Mammary epithelial cell (primary cell): ENCODE measurements at regions of chr10 and their contacts with region 1.

Region 1: DNA sequence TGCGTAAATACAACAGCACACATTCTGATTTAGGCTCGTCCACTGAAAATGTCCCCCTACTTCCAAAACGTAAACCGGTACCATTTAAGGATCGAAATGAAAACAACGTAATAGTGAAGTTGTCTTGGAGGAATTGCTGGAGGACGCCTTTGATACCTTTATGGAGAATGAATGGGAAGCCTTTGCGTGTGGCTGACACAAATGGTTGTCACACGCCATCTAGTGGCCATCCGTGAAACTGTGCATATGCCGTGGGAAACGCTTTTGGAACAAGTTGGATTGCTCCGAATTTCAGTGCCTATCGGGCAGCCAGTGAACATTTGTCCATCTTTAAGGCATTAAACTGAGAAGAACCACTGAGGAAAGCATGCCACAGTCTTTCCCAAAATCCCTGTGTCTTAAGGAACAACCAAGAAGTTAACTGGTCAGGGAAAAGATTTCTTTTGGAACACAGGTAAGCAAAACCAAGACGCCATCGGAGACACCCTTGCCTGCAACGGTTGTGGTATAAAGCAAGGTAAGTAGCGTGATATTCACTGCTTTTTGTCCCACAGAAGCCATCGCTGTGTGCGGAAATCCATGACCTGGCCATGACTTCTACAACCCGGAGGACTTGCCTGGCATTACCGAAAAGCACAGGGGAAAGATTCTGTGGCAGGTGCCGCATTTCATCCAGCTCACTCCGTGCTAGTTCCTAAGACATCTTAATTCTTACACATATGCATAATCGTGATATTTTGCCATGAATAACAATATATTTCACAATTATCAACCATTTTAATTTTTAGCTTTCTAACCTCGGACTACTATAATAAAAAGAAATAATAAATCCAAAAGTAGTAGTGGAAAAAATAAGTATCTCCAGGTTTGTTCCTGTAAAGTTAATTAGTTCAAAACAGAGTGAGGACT is 100.6 kb downstream of the FAM204A start:
- DNase-seq: peak; percentile 71
- H3K4me3 ChIP-seq: no peak overlapping the region
- H3K27ac ChIP-seq: no peak overlapping the region
- H3K4me1 ChIP-seq: peaks cover 5% of the 10 kb centered on the region
- H3K27me3 ChIP-seq: peaks cover 2% of the 10 kb centered on the region
- CTCF ChIP-seq: peak; percentile 91 to 94

Region 2: GRCh38 chr10:117216611-117217195 is 1024.8 kb before region 1 on chr10:
- CTCF ChIA-PET with region 1: no interaction called
- dilution Hi-C with region 1: no loop called
- in situ Hi-C with region 1: loop called in 1 of 2 experiments (anchors 25 kb)
- intact Hi-C with region 1: loop called (anchors 10 kb)
- DNase-seq: peak; percentile 59
- H3K4me3 ChIP-seq: peak overlapping the region; percentile 51 to 68 (median 56)
- H3K27ac ChIP-seq: no peak overlapping the region
- H3K4me1 ChIP-seq: peaks cover 18% of the 10 kb centered on the region
- H3K27me3 ChIP-seq: no peaks in the 10 kb centered on the region
- CTCF ChIP-seq: peak; percentile 85 to 100

Region 3: GRCh38 chr10:117496616-117497028 is 744.9 kb before region 1 on chr10:
- CTCF ChIA-PET with region 1: interaction called, 7 read pairs
- dilution Hi-C with region 1: no loop called
- in situ Hi-C with region 1: loop called in 1 of 2 experiments (anchors 10 kb)
- intact Hi-C with region 1: loop called (anchors 1 kb)
- DNase-seq: peak; percentile 80
- H3K4me3 ChIP-seq: no peak overlapping the region
- H3K27ac ChIP-seq: no peak overlapping the region
- H3K4me1 ChIP-seq: peaks cover 5% of the 10 kb centered on the region
- H3K27me3 ChIP-seq: peaks cover 5% of the 10 kb centered on the region
- CTCF ChIP-seq: peak; percentile 94 to 97

Region 4: GRCh38 chr10:117720931-117721835 is 520.3 kb before region 1 on chr10:
- CTCF ChIA-PET with region 1: no interaction called
- dilution Hi-C with region 1: no loop called
- in situ Hi-C with region 1: no loop called
- intact Hi-C with region 1: loop called (anchors 10 kb)
- DNase-seq: no peak
- H3K4me3 ChIP-seq: no peak overlapping the region
- H3K27ac ChIP-seq: no peak overlapping the region
- H3K4me1 ChIP-seq: peaks cover 6% of the 10 kb centered on the region
- H3K27me3 ChIP-seq: peaks cover 4% of the 10 kb centered on the region
- CTCF ChIP-seq: no peak

Region 5: GRCh38 chr10:117896517-117896916 is 345.0 kb before region 1 on chr10:
- CTCF ChIA-PET with region 1: no interaction called
- dilution Hi-C with region 1: no loop called
- in situ Hi-C with region 1: loop called in 1 of 2 experiments (anchors 25 kb)
- intact Hi-C with region 1: no loop called
- DNase-seq: no peak
- H3K4me3 ChIP-seq: no peak overlapping the region
- H3K27ac ChIP-seq: no peak overlapping the region
- H3K4me1 ChIP-seq: no peaks in the 10 kb centered on the region
- H3K27me3 ChIP-seq: peaks cover 5% of the 10 kb centered on the region
- CTCF ChIP-seq: no peak

Region 6: DNA sequence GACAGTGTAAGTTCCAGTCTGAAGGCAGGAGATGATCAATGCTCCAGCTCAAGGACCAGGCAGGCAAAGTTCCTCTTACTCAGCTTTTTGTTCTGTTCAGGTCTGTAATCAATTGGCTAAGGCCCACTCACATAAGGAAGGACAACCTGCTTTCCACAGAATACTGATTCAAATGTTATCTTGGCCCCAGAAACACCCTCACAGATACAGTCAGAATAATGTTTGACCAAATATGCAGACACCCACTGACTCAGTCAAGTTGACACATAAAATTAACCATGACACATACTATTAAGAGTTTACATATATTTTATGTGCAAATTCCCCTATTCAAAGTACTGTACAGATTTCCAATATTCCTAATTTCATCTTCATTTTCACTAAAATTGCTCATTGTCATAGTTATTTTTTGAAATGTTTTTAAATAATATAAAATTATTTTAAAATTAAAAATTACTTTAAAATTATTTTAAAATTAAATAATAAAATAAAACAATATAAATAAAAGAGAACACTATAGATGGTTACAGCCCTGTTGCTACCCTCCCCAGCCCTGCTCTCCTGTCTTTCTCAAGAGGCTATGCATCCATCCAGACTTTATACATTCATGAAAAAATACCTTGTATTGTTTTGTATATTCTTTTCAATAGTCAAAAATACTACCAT is 254.1 kb before region 1 on chr10:
- CTCF ChIA-PET with region 1: no interaction called
- dilution Hi-C with region 1: no loop called
- in situ Hi-C with region 1: no loop called
- intact Hi-C with region 1: no loop called
- DNase-seq: peak; percentile 18
- H3K4me3 ChIP-seq: no peak overlapping the region
- H3K27ac ChIP-seq: no peak overlapping the region
- H3K4me1 ChIP-seq: no peaks in the 10 kb centered on the region
- H3K27me3 ChIP-seq: no peaks in the 10 kb centered on the region
- CTCF ChIP-seq: no peak

Region 7: GRCh38 chr10:118341791-118342637 is 100.5 kb after region 1 on chr10 and contains the start of gene FAM204A:
- CTCF ChIA-PET with region 1: no interaction called
- dilution Hi-C with region 1: no loop called
- in situ Hi-C with region 1: no loop called
- intact Hi-C with region 1: no loop called
- DNase-seq: peak; percentile 91
- H3K4me3 ChIP-seq: peak within 1 kb of the TSS; percentile 62 to 87 (median 83)
- H3K27ac ChIP-seq: peak within 1 kb of the TSS; percentile 75
- H3K4me1 ChIP-seq: peaks cover 10% of the 10 kb centered on the region
- H3K27me3 ChIP-seq: no peaks in the 10 kb centered on the region
- CTCF ChIP-seq: no peak
- total RNA-seq, gene FAM204A: 50.3 to 73.2 TPM

Region 8: DNA sequence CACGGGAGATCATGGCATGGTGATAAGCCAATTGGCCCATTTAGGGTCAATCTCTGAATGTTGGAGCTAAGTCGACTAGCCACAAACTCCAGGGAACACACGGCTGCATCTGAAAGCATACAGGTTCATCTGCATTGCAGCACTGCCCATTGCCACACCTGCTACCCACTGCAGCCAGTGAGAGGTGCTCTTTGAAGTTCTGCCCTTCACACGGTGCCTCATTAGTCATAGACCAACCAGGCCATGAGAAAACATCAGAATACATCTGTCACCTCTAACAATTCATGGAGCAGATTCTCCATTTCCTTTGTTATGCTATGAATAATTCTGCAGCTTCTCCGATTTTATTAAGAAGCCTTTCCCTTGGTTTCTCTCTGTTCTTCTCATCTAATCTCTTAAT is 166.3 kb after region 1 on chr10:
- CTCF ChIA-PET with region 1: no interaction called
- dilution Hi-C with region 1: no loop called
- in situ Hi-C with region 1: no loop called
- intact Hi-C with region 1: no loop called
- DNase-seq: peak; percentile 4
- H3K4me3 ChIP-seq: no peak overlapping the region
- H3K27ac ChIP-seq: no peak overlapping the region
- H3K4me1 ChIP-seq: no peaks in the 10 kb centered on the region
- H3K27me3 ChIP-seq: peaks cover 10% of the 10 kb centered on the region
- CTCF ChIP-seq: no peak

Region 9: DNA sequence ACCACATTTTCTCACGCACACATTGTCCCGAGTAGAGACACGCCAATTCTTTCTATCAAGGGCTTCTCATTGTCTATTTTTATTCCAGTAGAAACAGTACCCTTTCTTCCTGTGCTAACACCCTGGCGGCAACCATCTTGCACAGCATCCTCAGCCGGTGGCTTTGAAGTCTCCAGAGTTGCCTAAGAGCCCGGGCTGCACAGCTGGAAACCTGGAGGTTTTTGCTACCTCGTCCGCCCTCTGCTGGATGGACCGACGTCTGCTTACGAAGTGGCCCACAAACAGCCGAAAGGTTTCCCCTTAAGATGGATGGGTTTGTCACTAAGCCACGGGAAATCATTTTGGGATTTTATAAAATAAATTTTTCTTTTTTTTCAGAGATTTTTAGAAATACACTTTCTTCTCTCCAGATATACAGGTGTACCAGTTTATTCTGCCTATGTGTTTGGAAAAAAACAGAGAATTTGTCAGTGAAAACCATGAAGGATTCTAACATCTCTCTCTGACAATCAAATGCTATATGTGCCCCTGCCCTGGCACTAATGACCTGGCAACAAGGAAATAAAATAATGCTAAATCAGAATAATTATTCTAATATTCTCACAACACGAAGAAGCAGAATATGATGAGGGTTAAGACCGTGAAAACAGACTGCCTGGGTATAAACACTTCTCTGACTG is 182.5 kb after region 1 on chr10:
- CTCF ChIA-PET with region 1: no interaction called
- dilution Hi-C with region 1: no loop called
- in situ Hi-C with region 1: no loop called
- intact Hi-C with region 1: loop called (anchors 2 kb)
- DNase-seq: peak; percentile 79
- H3K4me3 ChIP-seq: no peak overlapping the region
- H3K27ac ChIP-seq: no peak overlapping the region
- H3K4me1 ChIP-seq: no peaks in the 10 kb centered on the region
- H3K27me3 ChIP-seq: peaks cover 2% of the 10 kb centered on the region
- CTCF ChIP-seq: peak; percentile 75 to 89